A673 (cell line): ENCODE measurements at regions of chr1 and their contacts with region 1.

Region 1: GRCh38 chr1:61043010-61043820 is 39.1 kb upstream of the NFIA start:
- DNase-seq: peak; percentile 83
- H3K4me3 ChIP-seq: peak overlapping the region; percentile 39
- H3K27ac ChIP-seq: no peak overlapping the region
- H3K4me1 ChIP-seq: no peaks in the 10 kb centered on the region
- H3K27me3 ChIP-seq: no peaks in the 10 kb centered on the region
- CTCF ChIP-seq: peak; percentile 95

Region 2: GRCh38 chr1:60156371-60156770 is 886.8 kb before region 1 on chr1:
- CTCF ChIA-PET with region 1: no interaction called
- POLR2A ChIA-PET with region 1: no interaction called
- intact Hi-C with region 1: loop called (anchors 5 kb)
- DNase-seq: no peak
- H3K4me3 ChIP-seq: no peak overlapping the region
- H3K27ac ChIP-seq: no peak overlapping the region
- H3K4me1 ChIP-seq: no peaks in the 10 kb centered on the region
- H3K27me3 ChIP-seq: peaks cover 35% of the 10 kb centered on the region
- CTCF ChIP-seq: no peak

Region 3: GRCh38 chr1:60281360-60281932 is 761.8 kb before region 1 on chr1:
- CTCF ChIA-PET with region 1: interaction called, 3 read pairs
- POLR2A ChIA-PET with region 1: no interaction called
- intact Hi-C with region 1: loop called (anchors 5 kb)
- DNase-seq: peak; percentile 90
- H3K4me3 ChIP-seq: no peak overlapping the region
- H3K27ac ChIP-seq: no peak overlapping the region
- H3K4me1 ChIP-seq: no peaks in the 10 kb centered on the region
- H3K27me3 ChIP-seq: no peaks in the 10 kb centered on the region
- CTCF ChIP-seq: peak; percentile 95

Region 4: GRCh38 chr1:60848583-60849188 is 194.5 kb before region 1 on chr1:
- CTCF ChIA-PET with region 1: interaction called, 8 read pairs
- POLR2A ChIA-PET with region 1: no interaction called
- intact Hi-C with region 1: loop called (anchors 2 kb)
- DNase-seq: peak; percentile 68
- H3K4me3 ChIP-seq: no peak overlapping the region
- H3K27ac ChIP-seq: no peak overlapping the region
- H3K4me1 ChIP-seq: no peaks in the 10 kb centered on the region
- H3K27me3 ChIP-seq: no peaks in the 10 kb centered on the region
- CTCF ChIP-seq: peak; percentile 69

Region 5: GRCh38 chr1:60866917-60867531 is 176.2 kb before region 1 on chr1:
- CTCF ChIA-PET with region 1: no interaction called
- POLR2A ChIA-PET with region 1: no interaction called
- intact Hi-C with region 1: no loop called
- DNase-seq: no peak
- H3K4me3 ChIP-seq: no peak overlapping the region
- H3K27ac ChIP-seq: no peak overlapping the region
- H3K4me1 ChIP-seq: peaks cover 22% of the 10 kb centered on the region
- H3K27me3 ChIP-seq: peaks cover 44% of the 10 kb centered on the region
- CTCF ChIP-seq: no peak

Region 6: GRCh38 chr1:60924964-60925798 is 118.0 kb before region 1 on chr1:
- CTCF ChIA-PET with region 1: no interaction called
- POLR2A ChIA-PET with region 1: no interaction called
- intact Hi-C with region 1: no loop called
- DNase-seq: no peak
- H3K4me3 ChIP-seq: no peak overlapping the region
- H3K27ac ChIP-seq: no peak overlapping the region
- H3K4me1 ChIP-seq: peaks cover 4% of the 10 kb centered on the region
- H3K27me3 ChIP-seq: no peaks in the 10 kb centered on the region
- CTCF ChIP-seq: no peak

Region 7: GRCh38 chr1:60978421-60979357 is 64.5 kb before region 1 on chr1:
- CTCF ChIA-PET with region 1: interaction called, 11 read pairs
- POLR2A ChIA-PET with region 1: no interaction called
- intact Hi-C with region 1: loop called (anchors 2 kb)
- DNase-seq: peak; percentile 70
- H3K4me3 ChIP-seq: no peak overlapping the region
- H3K27ac ChIP-seq: no peak overlapping the region
- H3K4me1 ChIP-seq: no peaks in the 10 kb centered on the region
- H3K27me3 ChIP-seq: no peaks in the 10 kb centered on the region
- CTCF ChIP-seq: peak; percentile 80